ENCODE measurements at regions of chr17 and their contacts with region 1.

Region 1: GRCh38 chr17:7045909-7046724 is 2.2 kb upstream of the SLC16A11 start:
- DNase-seq: peak in 1 of 3 donors; percentile 46
- ATAC-seq: peak; percentile 29 to 56 (median 46)
- H3K4me3 ChIP-seq: peak overlapping the region in 2 of 3 donors; percentile 10 to 36
- H3K27ac ChIP-seq: peak overlapping the region in 2 of 3 donors; percentile 12 to 57
- H3K4me1 ChIP-seq: peaks cover 0 to 53% (median 26%) of the 10 kb centered on the region in 4 donors
- H3K27me3 ChIP-seq: no peaks in the 10 kb centered on the region
- CTCF ChIP-seq: peak; percentile 76 to 86 (median 85)
- POLR2A ChIP-seq: no peak

Region 2: GRCh38 chr17:7136266-7136877 is 90.3 kb after region 1 on chr17:
- intact Hi-C with region 1: loop called (anchors 5 kb)
- DNase-seq: peak; percentile 75 to 83 (median 79)
- ATAC-seq: peak; percentile 46 to 54 (median 52)
- H3K4me3 ChIP-seq: peak overlapping the region; percentile 16 to 39 (median 25)
- H3K27ac ChIP-seq: peak overlapping the region in 1 of 3 donors; percentile 21
- H3K4me1 ChIP-seq: peaks cover 0 to 23% (median 6%) of the 10 kb centered on the region in 4 donors
- H3K27me3 ChIP-seq: no peaks in the 10 kb centered on the region
- CTCF ChIP-seq: peak; percentile 94 to 96 (median 94)
- POLR2A ChIP-seq: no peak

Measured in right lobe of liver (tissue), 6 donors.